ENCODE measurements at regions of chr15 and their contacts with region 1.

Region 1: DNA sequence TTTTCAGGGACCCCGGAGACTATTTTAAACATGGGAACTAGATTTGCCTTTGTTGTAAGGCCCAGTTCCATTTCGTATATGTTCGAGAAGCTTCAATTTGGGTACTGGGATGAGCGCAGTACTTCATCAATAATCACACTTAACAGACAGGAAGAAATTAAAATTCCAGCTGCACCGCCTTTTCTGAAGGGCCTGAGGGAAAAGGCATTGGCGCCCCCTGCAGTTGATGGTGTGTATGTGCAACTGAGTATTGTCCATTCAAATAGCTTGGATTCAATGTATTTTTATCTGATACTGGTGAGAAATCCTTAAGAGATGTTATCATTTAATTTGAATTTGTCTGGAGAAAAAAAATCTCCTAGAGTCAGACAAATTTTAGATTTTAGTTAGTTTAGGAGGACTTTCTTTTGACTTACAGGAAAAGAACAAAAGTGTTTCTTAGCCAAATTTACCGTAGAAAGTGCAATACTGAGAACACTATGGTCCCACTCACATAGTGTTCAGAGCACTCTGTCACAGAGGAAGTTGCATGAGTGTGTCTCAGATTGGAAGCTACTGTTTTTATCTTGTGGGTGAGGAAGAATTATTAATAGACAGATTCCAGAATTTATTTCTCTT is 5.4 kb upstream of the ALDH1A2 start:
- DNase-seq: peak; percentile 76
- ATAC-seq: no peak
- H3K4me3 Mint-ChIP-seq: no peak overlapping the region
- H3K27ac Mint-ChIP-seq: no peak overlapping the region
- H3K4me1 Mint-ChIP-seq: peaks cover 3% of the 10 kb centered on the region
- H3K27me3 Mint-ChIP-seq: peaks cover 38% of the 10 kb centered on the region

Region 2: GRCh38 chr15:57561041-57561711 is 509.7 kb before region 1 on chr15:
- CTCF ChIA-PET with region 1: interaction called, 7 read pairs
- POLR2A ChIA-PET with region 1: no interaction called
- intact Hi-C with region 1: loop called (anchors 1 to 5 kb)
- DNase-seq: peak; percentile 74
- ATAC-seq: peak; percentile 83
- H3K4me3 Mint-ChIP-seq: peak overlapping the region; percentile 17
- H3K27ac Mint-ChIP-seq: peak overlapping the region; percentile 89
- H3K4me1 Mint-ChIP-seq: peaks cover 37% of the 10 kb centered on the region
- H3K27me3 Mint-ChIP-seq: no peaks in the 10 kb centered on the region

Region 3: DNA sequence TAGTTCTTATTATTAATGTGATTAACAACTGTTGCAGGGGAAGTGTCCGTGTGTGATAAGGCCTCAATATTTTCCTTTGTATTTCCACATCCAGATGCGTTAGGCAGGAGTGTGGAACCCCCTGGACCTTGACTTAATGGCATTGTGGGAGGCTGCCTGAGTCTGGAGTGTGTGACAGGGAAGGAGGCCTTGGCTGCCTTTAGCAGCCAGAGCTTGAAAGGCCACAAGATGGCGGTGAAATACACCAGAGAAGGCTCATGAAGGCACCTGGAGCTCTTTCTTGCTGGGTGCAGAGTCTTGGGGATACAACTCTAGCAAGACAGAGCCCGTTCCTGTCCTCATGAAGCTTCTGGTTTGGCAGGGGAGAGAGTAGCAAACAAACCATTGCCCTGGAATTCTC is 327.5 kb before region 1 on chr15:
- CTCF ChIA-PET with region 1: no interaction called
- POLR2A ChIA-PET with region 1: no interaction called
- intact Hi-C with region 1: loop called in 1 of 2 experiments (anchors 10 kb)
- DNase-seq: peak; percentile 12
- ATAC-seq: no peak
- H3K4me3 Mint-ChIP-seq: no peak overlapping the region
- H3K27ac Mint-ChIP-seq: no peak overlapping the region
- H3K4me1 Mint-ChIP-seq: no peaks in the 10 kb centered on the region
- H3K27me3 Mint-ChIP-seq: no peaks in the 10 kb centered on the region

Region 4: GRCh38 chr15:58043192-58043903 is 27.6 kb before region 1 on chr15:
- CTCF ChIA-PET with region 1: interaction called, 16 read pairs
- POLR2A ChIA-PET with region 1: no interaction called
- intact Hi-C with region 1: loop called in 1 of 2 experiments (anchors 2 kb)
- DNase-seq: peak; percentile 64
- ATAC-seq: no peak
- H3K4me3 Mint-ChIP-seq: no peak overlapping the region
- H3K27ac Mint-ChIP-seq: no peak overlapping the region
- H3K4me1 Mint-ChIP-seq: peaks cover 3% of the 10 kb centered on the region
- H3K27me3 Mint-ChIP-seq: peaks cover 27% of the 10 kb centered on the region

Region 5: GRCh38 chr15:58083526-58083925 is 12.6 kb after region 1 on chr15:
- CTCF ChIA-PET with region 1: interaction called, 16 read pairs
- POLR2A ChIA-PET with region 1: no interaction called
- intact Hi-C with region 1: no loop called
- DNase-seq: no peak
- ATAC-seq: no peak
- H3K4me3 Mint-ChIP-seq: no peak overlapping the region
- H3K27ac Mint-ChIP-seq: no peak overlapping the region
- H3K4me1 Mint-ChIP-seq: peaks cover 9% of the 10 kb centered on the region
- H3K27me3 Mint-ChIP-seq: peaks cover 27% of the 10 kb centered on the region

Region 6: GRCh38 chr15:58110999-58111717 is 40.2 kb after region 1 on chr15:
- CTCF ChIA-PET with region 1: no interaction called
- POLR2A ChIA-PET with region 1: no interaction called
- intact Hi-C with region 1: no loop called
- DNase-seq: no peak
- ATAC-seq: no peak
- H3K4me3 Mint-ChIP-seq: no peak overlapping the region
- H3K27ac Mint-ChIP-seq: no peak overlapping the region
- H3K4me1 Mint-ChIP-seq: no peaks in the 10 kb centered on the region
- H3K27me3 Mint-ChIP-seq: peaks cover 13% of the 10 kb centered on the region

Measured in activated CD4-positive, alpha-beta T cell treated with anti-CD3 and anti-CD28 coated beads for 36 hours (primary cell).